Body of pancreas (tissue), 4 donors: ENCODE measurements at regions of chr9 and their contacts with region 1.

Region 1: DNA sequence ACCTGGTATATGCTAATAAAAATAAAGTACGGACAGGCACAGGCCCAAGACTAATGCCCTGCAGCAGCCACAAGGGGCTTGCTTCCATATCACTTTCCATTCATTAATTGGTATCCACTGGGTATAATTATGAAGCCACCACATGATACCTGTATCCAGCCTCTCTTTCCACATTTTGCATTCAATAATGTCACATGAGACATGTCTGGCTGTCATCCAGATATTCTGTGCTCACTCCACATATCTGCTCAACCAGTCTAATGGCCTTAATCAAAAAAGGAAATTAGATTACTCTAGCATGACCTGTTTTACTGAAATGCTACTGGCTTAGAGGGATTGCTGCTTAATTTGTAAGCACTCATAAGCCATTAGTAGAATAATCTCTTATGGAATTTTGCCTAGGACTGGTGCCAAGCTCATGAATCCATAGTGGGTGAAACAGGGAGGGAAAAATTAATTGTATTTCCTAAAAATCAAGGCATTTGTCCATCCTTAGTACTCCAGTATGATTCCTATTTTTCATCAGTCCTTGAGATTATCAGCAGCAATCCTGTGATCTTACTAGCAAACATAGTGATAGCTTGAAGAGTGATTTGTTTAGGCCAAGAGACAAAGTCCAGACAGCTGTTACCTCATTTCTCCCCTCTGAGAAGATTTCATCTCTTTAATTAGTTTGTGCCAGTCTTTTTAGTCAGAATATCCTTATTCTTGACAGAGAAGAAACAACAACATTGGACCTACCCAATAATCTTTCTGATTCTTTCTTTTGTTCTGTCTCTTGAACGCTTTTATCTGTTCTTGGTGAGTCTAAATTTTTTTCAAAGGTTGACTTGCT is 119.2 kb upstream of the ABCA1 start:
- DNase-seq: peak in 2 of 4 donors; percentile 10 to 23
- ATAC-seq: peak; percentile 35
- H3K4me3 ChIP-seq: no peak overlapping the region
- H3K27ac ChIP-seq: no peak overlapping the region
- H3K4me1 ChIP-seq: peaks cover 17% of the 10 kb centered on the region
- H3K27me3 ChIP-seq: no peaks in the 10 kb centered on the region
- CTCF ChIP-seq: no peak
- POLR2A ChIP-seq: no peak

Region 2: GRCh38 chr9:104118916-104119315 is 928.2 kb before region 1 on chr9:
- intact Hi-C with region 1: no loop called
- DNase-seq: no peak
- ATAC-seq: no peak
- H3K4me3 ChIP-seq: no peak overlapping the region
- H3K27ac ChIP-seq: no peak overlapping the region
- H3K4me1 ChIP-seq: no peaks in the 10 kb centered on the region
- H3K27me3 ChIP-seq: no peaks in the 10 kb centered on the region
- CTCF ChIP-seq: no peak
- POLR2A ChIP-seq: no peak

Region 3: GRCh38 chr9:104987743-104988142 is 59.4 kb before region 1 on chr9:
- intact Hi-C with region 1: loop called (anchors 10 kb)
- DNase-seq: no peak
- ATAC-seq: no peak
- H3K4me3 ChIP-seq: no peak overlapping the region
- H3K27ac ChIP-seq: no peak overlapping the region
- H3K4me1 ChIP-seq: peaks cover 23% of the 10 kb centered on the region
- H3K27me3 ChIP-seq: no peaks in the 10 kb centered on the region
- CTCF ChIP-seq: no peak
- POLR2A ChIP-seq: no peak

Region 4: GRCh38 chr9:105127863-105128220 is 80.7 kb after region 1 on chr9:
- intact Hi-C with region 1: no loop called
- DNase-seq: no peak
- ATAC-seq: no peak
- H3K4me3 ChIP-seq: no peak overlapping the region
- H3K27ac ChIP-seq: no peak overlapping the region
- H3K4me1 ChIP-seq: no peaks in the 10 kb centered on the region
- H3K27me3 ChIP-seq: no peaks in the 10 kb centered on the region
- CTCF ChIP-seq: no peak
- POLR2A ChIP-seq: no peak

Region 5: DNA sequence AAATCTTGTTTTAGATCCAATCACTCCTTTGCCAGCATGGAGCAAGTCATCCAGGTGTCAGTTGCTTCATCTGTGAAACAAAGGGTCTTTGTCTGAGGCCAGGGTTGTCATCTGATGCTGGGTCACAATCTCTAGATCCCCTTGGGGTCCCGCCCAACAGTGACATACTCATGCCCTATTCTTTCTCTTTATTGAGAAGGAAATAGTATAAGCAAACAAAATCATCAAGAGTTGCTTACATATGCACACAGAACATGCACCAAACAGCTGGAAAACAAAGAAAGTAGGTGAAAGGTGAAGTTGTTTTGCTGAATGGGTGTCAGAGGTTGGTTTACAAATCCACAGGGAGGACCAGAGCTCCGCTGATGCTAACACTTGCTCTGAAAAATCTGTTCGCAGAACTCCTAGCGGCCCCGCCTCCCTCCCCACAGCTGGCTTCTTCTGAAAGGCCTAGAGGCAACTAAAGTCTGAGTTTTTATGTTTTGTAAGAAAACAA is 91.2 kb after region 1 on chr9:
- intact Hi-C with region 1: no loop called
- DNase-seq: no peak
- ATAC-seq: no peak
- H3K4me3 ChIP-seq: no peak overlapping the region
- H3K27ac ChIP-seq: no peak overlapping the region
- H3K4me1 ChIP-seq: peaks cover 5% of the 10 kb centered on the region
- H3K27me3 ChIP-seq: no peaks in the 10 kb centered on the region
- CTCF ChIP-seq: no peak
- POLR2A ChIP-seq: no peak